MCF 10A (cell line): ENCODE measurements at regions of chr20 and their contacts with region 1.

Region 1: GRCh38 chr20:34922654-34923424 is 32.8 kb downstream of the GSS start:
- DNase-seq: peak; percentile 93
- H3K4me3 Mint-ChIP-seq: no peak overlapping the region
- H3K27ac Mint-ChIP-seq: no peak overlapping the region
- H3K4me1 Mint-ChIP-seq: peaks cover 34% of the 10 kb centered on the region
- H3K27me3 Mint-ChIP-seq: no peaks in the 10 kb centered on the region
- CTCF ChIP-seq: no peak

Region 2: GRCh38 chr20:34538671-34539123 is 384.1 kb before region 1 on chr20:
- CTCF ChIA-PET with region 1: no interaction called
- POLR2A ChIA-PET with region 1: no interaction called
- intact Hi-C with region 1: no loop called
- DNase-seq: peak; percentile 62
- H3K4me3 Mint-ChIP-seq: no peak overlapping the region
- H3K27ac Mint-ChIP-seq: no peak overlapping the region
- H3K4me1 Mint-ChIP-seq: no peaks in the 10 kb centered on the region
- H3K27me3 Mint-ChIP-seq: no peaks in the 10 kb centered on the region
- CTCF ChIP-seq: peak; percentile 75

Region 3: GRCh38 chr20:34891166-34892062 is 31.4 kb before region 1 on chr20:
- CTCF ChIA-PET with region 1: interaction called, 3 read pairs
- POLR2A ChIA-PET with region 1: interaction called, 12 read pairs
- intact Hi-C with region 1: no loop called
- DNase-seq: peak; percentile 79
- H3K4me3 Mint-ChIP-seq: no peak overlapping the region
- H3K27ac Mint-ChIP-seq: peak overlapping the region; percentile 69
- H3K4me1 Mint-ChIP-seq: peaks cover 44% of the 10 kb centered on the region
- H3K27me3 Mint-ChIP-seq: no peaks in the 10 kb centered on the region
- CTCF ChIP-seq: no peak

Region 4: DNA sequence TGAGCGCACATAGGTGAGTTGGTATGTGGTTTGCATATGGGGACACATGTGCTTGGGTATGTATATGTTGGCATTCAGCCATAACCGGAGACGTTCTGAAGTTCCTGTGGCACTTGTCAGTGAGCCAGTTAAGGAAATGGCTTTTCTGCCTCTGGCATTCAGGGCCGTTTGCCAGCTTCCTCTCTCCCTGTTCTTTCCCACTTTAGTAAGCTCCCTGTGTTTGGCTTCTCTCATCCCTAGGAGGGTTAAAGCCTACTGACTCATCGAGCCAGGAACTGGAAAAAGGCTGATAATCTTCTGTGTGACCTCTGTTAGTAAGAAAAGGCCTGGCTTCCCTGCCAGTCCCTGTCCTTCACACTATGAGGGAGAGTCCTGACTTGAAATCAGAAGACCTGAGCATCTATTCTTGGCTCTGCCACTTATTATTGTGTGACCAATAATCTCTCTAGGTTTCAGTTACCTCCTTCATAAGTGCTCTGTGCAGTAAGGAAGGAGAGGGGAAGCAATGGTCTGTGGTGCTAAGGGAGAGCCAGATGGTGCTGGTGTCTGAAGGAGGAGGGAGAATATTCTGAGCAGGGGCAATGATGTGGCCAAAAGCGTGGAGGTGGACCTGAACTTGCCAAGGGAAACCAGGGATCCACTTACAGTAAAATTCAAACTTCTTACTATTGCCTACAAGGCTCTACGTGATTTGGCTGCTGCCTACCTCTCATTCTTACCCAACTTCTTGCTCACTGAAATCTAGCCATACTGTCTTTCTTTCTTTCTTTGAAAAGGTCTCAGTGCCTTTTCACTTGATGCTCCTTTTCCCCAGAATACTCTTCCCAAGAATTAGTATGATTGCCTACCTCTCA is 15.0 kb before region 1 on chr20:
- CTCF ChIA-PET with region 1: interaction called, 4 read pairs
- POLR2A ChIA-PET with region 1: interaction called, 17 read pairs
- intact Hi-C with region 1: no loop called
- DNase-seq: peak; percentile 99
- H3K4me3 Mint-ChIP-seq: peak overlapping the region; percentile 26
- H3K27ac Mint-ChIP-seq: peak overlapping the region; percentile 55
- H3K4me1 Mint-ChIP-seq: peaks cover 24% of the 10 kb centered on the region
- H3K27me3 Mint-ChIP-seq: no peaks in the 10 kb centered on the region
- CTCF ChIP-seq: no peak

Region 5: GRCh38 chr20:34955232-34956040 is 32.6 kb after region 1 on chr20 and contains the starts of genes GSS and MYH7B:
- CTCF ChIA-PET with region 1: interaction called, 6 read pairs
- POLR2A ChIA-PET with region 1: interaction called, 18 read pairs
- intact Hi-C with region 1: no loop called
- DNase-seq: peak; percentile 98
- H3K4me3 Mint-ChIP-seq: peak within 1 kb of the TSS; percentile 95
- H3K27ac Mint-ChIP-seq: peak within 1 kb of the TSS; percentile 97
- H3K4me1 Mint-ChIP-seq: peaks cover 21% of the 10 kb centered on the region
- H3K27me3 Mint-ChIP-seq: no peaks in the 10 kb centered on the region
- CTCF ChIP-seq: peak; percentile 64
- total RNA-seq, gene GSS: 94.6 and 115 TPM in 2 replicates
- total RNA-seq, gene MYH7B: 0.07 and 0.27 TPM in 2 replicates